ENCODE measurements at regions of chr20 and their contacts with region 1.

Region 1: DNA sequence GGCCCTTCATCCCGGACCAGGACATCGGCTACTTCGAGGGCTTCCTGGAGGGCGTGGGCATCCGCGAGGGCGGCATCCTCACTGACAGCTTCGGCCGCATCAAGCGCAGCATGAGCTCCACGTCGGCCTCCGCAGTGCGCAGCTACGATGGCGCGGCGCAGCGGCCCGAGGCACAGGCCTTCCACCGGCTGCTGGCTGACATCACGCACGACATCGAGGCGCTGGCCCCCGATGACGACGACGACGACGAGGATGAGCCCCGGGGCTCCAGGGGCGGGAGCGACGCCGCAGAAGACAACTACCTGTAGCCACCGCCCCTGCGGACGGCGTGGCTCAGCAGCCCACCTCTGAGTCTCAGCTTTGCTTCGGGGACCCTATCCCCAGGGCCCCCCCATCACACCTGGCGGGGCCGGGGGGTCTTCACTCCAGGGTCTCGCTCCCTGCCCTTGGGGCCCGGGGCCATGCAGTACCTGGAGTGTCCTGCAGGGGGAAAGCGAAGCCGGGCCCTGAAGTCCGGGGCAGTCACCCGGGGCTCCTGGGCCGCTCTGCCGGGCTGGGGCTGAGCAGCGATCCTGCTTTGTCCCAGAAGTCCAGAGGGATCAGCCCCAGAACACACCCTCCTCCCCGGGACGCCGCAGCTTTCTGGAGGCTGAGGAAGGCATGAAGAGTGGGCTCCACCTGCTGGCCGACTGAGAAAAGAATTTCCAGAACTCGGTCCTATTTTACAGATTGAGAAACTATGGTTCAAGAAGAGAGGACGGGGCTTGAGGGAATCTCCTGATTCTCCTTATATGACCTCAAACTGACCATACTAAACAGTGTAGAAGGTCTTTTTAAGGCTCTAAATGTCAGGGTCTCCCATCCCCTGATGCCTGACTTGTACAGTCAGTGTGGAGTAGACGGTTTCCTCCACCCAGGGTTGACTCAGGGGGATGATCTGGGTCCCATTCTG is 20.8 kb upstream of the HCK start:
- DNase-seq: peak; percentile 87 to 93 (median 89)
- ATAC-seq: peak; percentile 86 to 88
- H3K4me3 ChIP-seq: peak overlapping the region; percentile 1
- H3K27ac ChIP-seq: no peak overlapping the region
- H3K4me1 ChIP-seq: no peaks in the 10 kb centered on the region
- H3K27me3 ChIP-seq: no peaks in the 10 kb centered on the region

Region 2: DNA sequence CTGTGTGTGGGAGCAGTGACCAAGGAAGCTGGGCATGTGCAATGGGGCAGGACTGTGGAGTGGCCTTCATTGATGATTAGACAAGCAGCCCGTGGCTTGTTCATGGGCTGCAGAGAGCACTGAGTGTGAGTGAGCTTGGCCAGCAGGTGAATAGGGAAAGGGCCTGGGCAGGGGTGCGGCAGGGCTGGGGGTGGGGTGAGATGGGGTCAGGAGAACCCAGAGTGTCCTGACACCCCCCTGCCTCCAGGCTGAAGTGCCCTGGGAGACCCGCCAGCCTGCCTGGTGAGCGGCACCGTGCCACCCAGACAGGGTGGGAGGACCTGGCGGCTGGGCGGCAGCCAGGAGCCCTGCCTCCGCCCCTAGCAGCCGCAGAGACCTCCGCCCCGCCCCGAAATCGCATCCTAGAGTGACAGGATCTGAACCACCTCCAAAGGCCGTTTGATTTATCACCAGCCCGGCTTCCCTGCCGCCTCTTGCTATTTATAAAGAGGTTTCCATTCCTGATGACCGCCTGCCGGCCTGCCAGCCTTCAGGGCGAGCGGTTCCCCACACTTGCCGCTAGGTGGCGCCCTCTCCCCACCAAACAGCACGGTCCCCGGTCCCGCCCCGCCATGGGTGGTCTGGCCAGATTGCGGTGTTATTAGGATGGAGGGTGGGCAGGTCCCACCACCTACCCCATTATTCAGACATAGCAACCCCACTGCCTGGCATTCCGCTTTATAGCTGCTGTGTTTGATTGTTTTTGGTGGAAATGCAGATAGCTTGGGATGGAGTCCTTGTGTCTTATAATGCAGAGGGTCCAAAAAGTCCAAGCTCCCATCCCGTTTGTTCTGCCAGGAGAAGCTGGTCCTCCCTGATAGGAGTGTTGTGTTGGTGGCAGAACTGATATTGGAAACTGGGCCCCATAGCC is 208.6 kb before region 1 on chr20:
- intact Hi-C with region 1: loop called in 2 of 4 experiments (anchors 2 to 10 kb)
- DNase-seq: peak; percentile 73 to 90 (median 89)
- ATAC-seq: peak; percentile 81 to 83
- H3K4me3 ChIP-seq: no peak overlapping the region
- H3K27ac ChIP-seq: peak overlapping the region; percentile 25
- H3K4me1 ChIP-seq: no peaks in the 10 kb centered on the region
- H3K27me3 ChIP-seq: no peaks in the 10 kb centered on the region

Region 3: DNA sequence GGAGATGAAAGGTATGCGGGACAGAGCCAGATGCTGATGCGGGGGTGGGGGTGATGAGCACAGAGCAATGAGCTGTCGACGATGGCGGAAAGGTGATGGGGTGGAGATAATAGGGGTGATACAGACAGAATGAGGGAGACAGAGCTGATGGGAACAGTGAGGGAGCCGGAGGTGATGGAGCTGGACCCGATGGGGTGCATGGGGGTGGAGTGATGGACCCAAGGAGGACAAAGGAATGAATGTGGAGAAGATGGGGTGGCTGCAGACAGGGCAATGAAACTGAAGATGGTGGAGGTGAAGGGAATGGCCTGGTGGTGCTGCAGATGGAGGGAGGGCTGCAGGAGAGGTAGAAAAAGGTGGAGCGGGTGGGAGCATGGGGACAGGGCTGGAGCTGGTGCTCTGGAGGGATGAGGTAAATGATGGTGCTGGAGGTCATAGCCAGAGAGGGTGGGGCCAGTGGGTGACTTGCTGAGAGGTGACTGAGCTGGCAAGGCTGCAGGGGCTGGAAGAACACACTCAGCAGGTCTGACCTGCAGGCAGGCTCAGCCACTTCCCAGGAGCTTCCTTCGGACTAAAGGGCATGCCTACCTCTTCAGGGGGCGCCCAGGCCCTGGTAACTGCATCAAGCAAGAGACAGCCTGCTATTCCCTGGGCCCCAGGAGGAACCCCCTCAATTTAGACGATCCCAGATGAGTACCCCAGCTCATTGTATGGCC is 179.9 kb before region 1 on chr20:
- intact Hi-C with region 1: loop called (anchors 5 to 10 kb)
- DNase-seq: peak in 1 of 3 donors; percentile 16
- ATAC-seq: no peak
- H3K4me3 ChIP-seq: no peak overlapping the region
- H3K27ac ChIP-seq: no peak overlapping the region
- H3K4me1 ChIP-seq: no peaks in the 10 kb centered on the region
- H3K27me3 ChIP-seq: no peaks in the 10 kb centered on the region

Region 4: GRCh38 chr20:31859998-31860709 is 171.1 kb before region 1 on chr20:
- intact Hi-C with region 1: loop called in 2 of 4 experiments (anchors 10 kb)
- DNase-seq: peak in 2 of 3 donors; percentile 63 to 72
- ATAC-seq: peak; percentile 56 to 83
- H3K4me3 ChIP-seq: no peak overlapping the region
- H3K27ac ChIP-seq: no peak overlapping the region
- H3K4me1 ChIP-seq: no peaks in the 10 kb centered on the region
- H3K27me3 ChIP-seq: no peaks in the 10 kb centered on the region

Region 5: GRCh38 chr20:31951530-31952453 is 79.5 kb before region 1 on chr20 and contains the start of gene PDRG1:
- intact Hi-C with region 1: loop called in 1 of 4 experiments (anchors 10 kb)
- DNase-seq: peak; percentile 96 to 99 (median 99)
- ATAC-seq: peak; percentile 97
- H3K4me3 ChIP-seq: peak within 1 kb of the TSS; percentile 85
- H3K27ac ChIP-seq: peak within 1 kb of the TSS; percentile 55
- H3K4me1 ChIP-seq: peaks cover 6% of the 10 kb centered on the region
- H3K27me3 ChIP-seq: no peaks in the 10 kb centered on the region
- total RNA-seq, gene PDRG1: 7.4 to 8.8 (median 8.6) TPM

Region 6: GRCh38 chr20:31962761-31963160 is 68.5 kb before region 1 on chr20:
- intact Hi-C with region 1: loop called in 2 of 4 experiments (anchors 5 to 10 kb)
- DNase-seq: no peak
- ATAC-seq: no peak
- H3K4me3 ChIP-seq: no peak overlapping the region
- H3K27ac ChIP-seq: no peak overlapping the region
- H3K4me1 ChIP-seq: no peaks in the 10 kb centered on the region
- H3K27me3 ChIP-seq: no peaks in the 10 kb centered on the region

Region 7: GRCh38 chr20:32077190-32077589 is 45.9 kb after region 1 on chr20:
- intact Hi-C with region 1: no loop called
- DNase-seq: no peak
- ATAC-seq: no peak
- H3K4me3 ChIP-seq: no peak overlapping the region
- H3K27ac ChIP-seq: no peak overlapping the region
- H3K4me1 ChIP-seq: no peaks in the 10 kb centered on the region
- H3K27me3 ChIP-seq: no peaks in the 10 kb centered on the region

Region 8: GRCh38 chr20:32183947-32184635 is 152.8 kb after region 1 on chr20:
- intact Hi-C with region 1: no loop called
- DNase-seq: no peak
- ATAC-seq: no peak
- H3K4me3 ChIP-seq: no peak overlapping the region
- H3K27ac ChIP-seq: no peak overlapping the region
- H3K4me1 ChIP-seq: peaks cover 9% of the 10 kb centered on the region
- H3K27me3 ChIP-seq: no peaks in the 10 kb centered on the region